ENCODE measurements at regions of chr2 and their contacts with region 1.

Region 1: GRCh38 chr2:158006961-158007719 is 94.5 kb upstream of the UPP2 start:
- DNase-seq: peak; percentile 31
- ATAC-seq: peak; percentile 65
- H3K4me3 Mint-ChIP-seq: no peak overlapping the region
- H3K27ac Mint-ChIP-seq: no peak overlapping the region
- H3K4me1 Mint-ChIP-seq: peaks cover 12% of the 10 kb centered on the region
- H3K27me3 Mint-ChIP-seq: peaks cover 5% of the 10 kb centered on the region

Region 2: GRCh38 chr2:156553714-156554442 is 1453.3 kb before region 1 on chr2:
- CTCF ChIA-PET with region 1: no interaction called
- POLR2A ChIA-PET with region 1: no interaction called
- DNase-seq: no peak
- ATAC-seq: no peak
- H3K4me3 Mint-ChIP-seq: no peak overlapping the region
- H3K27ac Mint-ChIP-seq: no peak overlapping the region
- H3K4me1 Mint-ChIP-seq: no peaks in the 10 kb centered on the region
- H3K27me3 Mint-ChIP-seq: no peaks in the 10 kb centered on the region

Region 3: DNA sequence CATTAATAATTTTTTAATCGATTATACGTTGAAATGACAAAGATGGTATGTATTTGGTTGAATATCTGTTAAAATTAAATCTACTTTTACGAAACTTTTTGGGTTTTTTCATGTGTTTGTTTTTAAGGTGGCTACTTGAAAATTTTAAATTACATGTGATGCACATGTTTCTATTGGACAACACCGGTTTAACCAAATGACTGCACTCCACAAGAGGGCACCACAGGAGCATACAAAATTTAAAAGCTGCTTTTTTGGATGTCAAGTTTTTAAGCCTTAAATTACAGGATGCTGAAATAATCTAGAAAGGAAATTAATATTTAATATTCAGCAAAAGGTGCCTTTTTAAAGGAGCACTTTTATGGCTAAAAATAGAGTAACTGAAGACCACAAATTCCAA is 229.7 kb before region 1 on chr2:
- CTCF ChIA-PET with region 1: interaction called, 14 read pairs
- POLR2A ChIA-PET with region 1: no interaction called
- DNase-seq: peak; percentile 68
- ATAC-seq: peak; percentile 51
- H3K4me3 Mint-ChIP-seq: no peak overlapping the region
- H3K27ac Mint-ChIP-seq: no peak overlapping the region
- H3K4me1 Mint-ChIP-seq: peaks cover 9% of the 10 kb centered on the region
- H3K27me3 Mint-ChIP-seq: no peaks in the 10 kb centered on the region

Region 4: DNA sequence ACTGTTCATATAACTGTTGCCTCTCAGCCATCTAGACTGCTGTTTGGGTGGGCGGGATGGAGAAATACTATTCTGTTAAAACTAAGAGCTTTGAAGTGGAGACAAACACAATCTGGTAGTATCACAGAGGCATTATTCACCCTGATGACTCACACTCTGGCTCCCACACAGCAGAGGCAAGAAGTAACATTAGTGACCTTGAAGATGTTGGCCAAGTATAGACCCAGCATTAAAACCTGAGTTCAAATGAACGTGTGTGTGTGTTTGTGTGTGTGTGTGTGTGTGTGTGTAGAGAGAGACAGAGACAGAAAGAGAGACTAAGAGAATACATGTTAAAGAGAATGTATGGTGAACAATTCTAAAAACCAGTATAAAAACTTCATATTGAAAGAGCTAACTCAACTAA is 108.5 kb before region 1 on chr2:
- CTCF ChIA-PET with region 1: interaction called, 25 read pairs
- POLR2A ChIA-PET with region 1: interaction called, 3 read pairs
- DNase-seq: peak; percentile 65
- ATAC-seq: peak; percentile 67
- H3K4me3 Mint-ChIP-seq: peak overlapping the region; percentile 81
- H3K27ac Mint-ChIP-seq: peak overlapping the region; percentile 98
- H3K4me1 Mint-ChIP-seq: peaks cover 74% of the 10 kb centered on the region
- H3K27me3 Mint-ChIP-seq: no peaks in the 10 kb centered on the region

Region 5: DNA sequence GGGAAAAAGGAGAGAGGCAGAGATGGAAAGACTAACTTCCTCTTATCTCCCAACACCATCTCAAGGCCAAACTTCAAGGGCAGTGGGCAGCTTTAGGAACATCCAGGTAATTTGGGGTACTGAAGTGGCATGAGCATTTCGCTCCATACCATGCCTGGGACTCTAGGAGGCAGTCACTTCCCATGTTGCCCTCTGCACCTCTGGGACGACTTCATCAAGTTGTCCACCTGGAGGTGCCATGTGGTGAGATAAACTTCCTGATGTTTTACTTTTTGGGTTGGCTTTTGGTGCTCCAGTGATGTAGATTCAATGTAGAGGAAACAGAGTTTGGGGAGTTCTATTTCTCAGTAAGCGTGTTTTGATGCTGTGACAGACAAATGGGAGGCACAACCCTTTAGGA is 38.2 kb after region 1 on chr2:
- CTCF ChIA-PET with region 1: no interaction called
- POLR2A ChIA-PET with region 1: no interaction called
- DNase-seq: no peak
- ATAC-seq: no peak
- H3K4me3 Mint-ChIP-seq: no peak overlapping the region
- H3K27ac Mint-ChIP-seq: no peak overlapping the region
- H3K4me1 Mint-ChIP-seq: no peaks in the 10 kb centered on the region
- H3K27me3 Mint-ChIP-seq: peaks cover 7% of the 10 kb centered on the region

Region 6: GRCh38 chr2:158191076-158191895 is 184.1 kb after region 1 on chr2:
- CTCF ChIA-PET with region 1: no interaction called
- POLR2A ChIA-PET with region 1: no interaction called
- DNase-seq: no peak
- ATAC-seq: peak; percentile 58
- H3K4me3 Mint-ChIP-seq: no peak overlapping the region
- H3K27ac Mint-ChIP-seq: no peak overlapping the region
- H3K4me1 Mint-ChIP-seq: peaks cover 21% of the 10 kb centered on the region
- H3K27me3 Mint-ChIP-seq: peaks cover 16% of the 10 kb centered on the region

Measured in activated CD8-positive, alpha-beta T cell treated with anti-CD3 and anti-CD28 coated beads, Interleukin-2, amount 10 ng/mL, durations not matched to agents 7 days and 5 days (primary cell).